Activated naive CD4-positive, alpha-beta T cell treated with anti-CD3 and anti-CD28 coated beads for 36 hours (primary cell): ENCODE measurements at regions of chr7 and their contacts with region 1.

Region 1: DNA sequence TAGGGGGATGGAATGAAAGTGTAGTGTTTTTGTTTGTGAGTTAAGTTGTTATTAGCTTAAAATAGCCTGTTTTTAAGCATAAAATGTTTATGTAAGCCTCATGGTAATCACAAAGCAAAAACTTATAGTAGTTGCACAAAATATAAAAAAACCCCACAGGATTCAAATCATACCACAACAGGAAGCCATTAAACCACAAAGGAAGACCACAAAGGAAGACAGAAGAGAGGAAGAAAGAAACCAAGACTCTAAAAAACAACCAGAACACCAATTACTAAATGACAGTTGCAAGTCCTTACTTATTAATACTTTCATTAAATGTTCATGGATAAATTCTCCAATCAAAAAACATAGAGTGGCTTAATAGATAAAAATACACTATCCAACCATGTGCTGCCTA is 63.6 kb downstream of the ANKRD7 start:
- DNase-seq: no peak
- H3K4me3 Mint-ChIP-seq: peak overlapping the region; percentile 19
- H3K27ac Mint-ChIP-seq: no peak overlapping the region
- H3K4me1 Mint-ChIP-seq: peaks cover 19% of the 10 kb centered on the region
- H3K27me3 Mint-ChIP-seq: peaks cover 32% of the 10 kb centered on the region

Region 2: DNA sequence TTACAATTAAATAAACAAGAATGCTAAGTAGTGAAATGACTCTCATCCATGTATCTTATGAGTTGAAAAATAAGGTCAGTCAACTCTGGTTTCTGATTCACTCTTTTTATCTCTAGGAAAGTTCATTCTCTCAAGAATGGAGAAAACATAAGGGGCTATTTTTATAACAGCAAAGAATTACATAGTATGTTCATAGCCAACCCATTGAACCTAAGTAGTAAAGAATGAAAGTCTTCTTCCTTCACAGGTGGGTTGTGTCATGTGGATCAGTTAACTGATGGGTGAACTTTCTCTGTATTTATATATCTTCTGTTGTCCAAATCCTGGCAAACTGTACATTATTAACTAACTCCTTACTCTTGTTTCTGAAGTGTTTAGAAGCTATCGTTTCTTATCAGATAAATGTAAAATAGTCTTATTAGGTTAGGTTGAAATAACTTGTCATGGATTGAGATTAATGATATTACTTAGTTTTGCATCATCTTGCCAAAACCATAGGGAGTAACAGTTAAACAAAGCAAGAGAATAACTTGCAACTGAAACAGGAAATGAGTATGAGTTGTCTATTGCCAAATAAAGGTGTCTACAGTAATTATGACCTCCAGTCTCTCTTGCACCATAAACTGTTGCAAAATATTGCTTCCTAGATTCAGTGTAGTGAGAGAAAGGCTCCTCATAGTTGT is 23.2 kb after region 1 on chr7:
- CTCF ChIA-PET with region 1: no interaction called
- intact Hi-C with region 1: loop called (anchors 2 kb)
- DNase-seq: no peak
- H3K4me3 Mint-ChIP-seq: no peak overlapping the region
- H3K27ac Mint-ChIP-seq: no peak overlapping the region
- H3K4me1 Mint-ChIP-seq: peaks cover 2% of the 10 kb centered on the region
- H3K27me3 Mint-ChIP-seq: peaks cover 8% of the 10 kb centered on the region

Region 3: GRCh38 chr7:118352854-118353453 is 64.9 kb after region 1 on chr7:
- CTCF ChIA-PET with region 1: no interaction called
- intact Hi-C with region 1: no loop called
- DNase-seq: no peak
- H3K4me3 Mint-ChIP-seq: no peak overlapping the region
- H3K27ac Mint-ChIP-seq: no peak overlapping the region
- H3K4me1 Mint-ChIP-seq: no peaks in the 10 kb centered on the region
- H3K27me3 Mint-ChIP-seq: peaks cover 7% of the 10 kb centered on the region